Spleen (tissue), 13 donors: ENCODE measurements at regions of chr2 and their contacts with region 1.

Region 1: GRCh38 chr2:197705121-197705911 is at the start of gene MARS2:
- DNase-seq: peak; percentile 97
- H3K4me3 ChIP-seq: peak within 1 kb of the TSS; percentile 82 to 99 (median 94)
- H3K27ac ChIP-seq: peak within 1 kb of the TSS; percentile 62 to 92 (median 86)
- H3K4me1 ChIP-seq: peaks cover 30 to 59% (median 52%) of the 10 kb centered on the region in 6 donors
- H3K27me3 ChIP-seq: no peaks in the 10 kb centered on the region
- CTCF ChIP-seq: peak in 1 of 11 experiments; percentile 40
- POLR2A ChIP-seq: no peak
- total RNA-seq, gene MARS2: 8.9 to 12.7 (median 10.0) TPM

Region 2: GRCh38 chr2:197777823-197778407 is 72.6 kb after region 1 on chr2:
- intact Hi-C with region 1: loop called (anchors 5 kb)
- DNase-seq: no peak
- H3K4me3 ChIP-seq: no peak overlapping the region
- H3K27ac ChIP-seq: no peak overlapping the region
- H3K4me1 ChIP-seq: no peaks in the 10 kb centered on the region
- H3K27me3 ChIP-seq: no peaks in the 10 kb centered on the region
- CTCF ChIP-seq: peak; percentile 22 to 76 (median 66)
- POLR2A ChIP-seq: no peak

Region 3: GRCh38 chr2:198084136-198084535 is 378.8 kb after region 1 on chr2:
- intact Hi-C with region 1: no loop called
- DNase-seq: no peak
- H3K4me3 ChIP-seq: no peak overlapping the region
- H3K27ac ChIP-seq: no peak overlapping the region
- H3K4me1 ChIP-seq: no peaks in the 10 kb centered on the region
- H3K27me3 ChIP-seq: no peaks in the 10 kb centered on the region
- CTCF ChIP-seq: no peak
- POLR2A ChIP-seq: no peak